MCF 10A (cell line): ENCODE measurements at regions of chr5 and their contacts with region 1.

Region 1: GRCh38 chr5:62779010-62779422 is 200.4 kb downstream of the LRRC70 start:
- DNase-seq: peak; percentile 69
- H3K4me3 Mint-ChIP-seq: no peak overlapping the region
- H3K27ac Mint-ChIP-seq: no peak overlapping the region
- H3K4me1 Mint-ChIP-seq: no peaks in the 10 kb centered on the region
- H3K27me3 Mint-ChIP-seq: no peaks in the 10 kb centered on the region
- CTCF ChIP-seq: peak; percentile 61

Region 2: DNA sequence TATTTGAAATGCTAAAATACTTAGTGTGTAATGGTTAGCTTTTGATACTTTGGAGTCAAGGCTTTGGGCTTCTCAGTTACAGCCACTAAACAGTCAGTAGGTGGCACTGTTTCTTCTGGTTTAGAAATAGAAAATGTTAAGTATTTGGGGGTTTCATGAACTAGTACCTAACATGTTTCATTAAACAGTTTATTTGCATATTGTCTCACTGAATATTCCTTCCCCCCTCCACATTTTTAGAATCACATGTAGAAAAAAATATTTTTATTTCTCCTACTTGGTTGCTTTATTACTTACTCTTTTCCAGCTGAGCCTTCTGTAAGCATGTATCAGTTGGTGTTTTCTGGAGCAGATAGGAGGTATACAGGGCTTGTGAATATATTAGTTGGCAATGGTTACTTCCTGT is 318.4 kb before region 1 on chr5:
- CTCF ChIA-PET with region 1: interaction called, 40 read pairs
- POLR2A ChIA-PET with region 1: no interaction called
- intact Hi-C with region 1: loop called (anchors 1 kb)
- DNase-seq: peak; percentile 45
- H3K4me3 Mint-ChIP-seq: no peak overlapping the region
- H3K27ac Mint-ChIP-seq: no peak overlapping the region
- H3K4me1 Mint-ChIP-seq: no peaks in the 10 kb centered on the region
- H3K27me3 Mint-ChIP-seq: no peaks in the 10 kb centered on the region
- CTCF ChIP-seq: peak; percentile 69

Region 3: DNA sequence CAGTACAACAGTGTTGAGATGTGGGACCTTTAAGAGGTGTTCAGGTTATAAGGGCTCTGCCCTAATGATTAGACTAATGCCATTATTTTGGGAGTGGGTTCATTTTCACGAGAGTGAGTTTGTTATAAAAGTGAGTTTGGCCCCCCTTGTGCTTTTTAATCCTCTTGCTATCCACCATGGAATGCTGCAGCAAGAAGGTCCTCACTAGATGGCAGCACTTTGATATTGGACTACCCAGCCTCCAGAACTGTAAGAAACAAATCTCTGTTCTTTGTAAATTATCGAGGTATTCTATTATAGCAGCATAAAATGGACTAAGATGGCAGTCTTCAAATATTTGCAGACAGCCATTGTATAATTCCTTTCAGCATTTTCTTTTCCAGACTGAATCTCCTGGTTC is 12.0 kb after region 1 on chr5:
- CTCF ChIA-PET with region 1: interaction called, 17 read pairs
- POLR2A ChIA-PET with region 1: interaction called, 5 read pairs
- intact Hi-C with region 1: no loop called
- DNase-seq: peak; percentile 28
- H3K4me3 Mint-ChIP-seq: no peak overlapping the region
- H3K27ac Mint-ChIP-seq: no peak overlapping the region
- H3K4me1 Mint-ChIP-seq: peaks cover 15% of the 10 kb centered on the region
- H3K27me3 Mint-ChIP-seq: no peaks in the 10 kb centered on the region
- CTCF ChIP-seq: peak; percentile 18

Region 4: DNA sequence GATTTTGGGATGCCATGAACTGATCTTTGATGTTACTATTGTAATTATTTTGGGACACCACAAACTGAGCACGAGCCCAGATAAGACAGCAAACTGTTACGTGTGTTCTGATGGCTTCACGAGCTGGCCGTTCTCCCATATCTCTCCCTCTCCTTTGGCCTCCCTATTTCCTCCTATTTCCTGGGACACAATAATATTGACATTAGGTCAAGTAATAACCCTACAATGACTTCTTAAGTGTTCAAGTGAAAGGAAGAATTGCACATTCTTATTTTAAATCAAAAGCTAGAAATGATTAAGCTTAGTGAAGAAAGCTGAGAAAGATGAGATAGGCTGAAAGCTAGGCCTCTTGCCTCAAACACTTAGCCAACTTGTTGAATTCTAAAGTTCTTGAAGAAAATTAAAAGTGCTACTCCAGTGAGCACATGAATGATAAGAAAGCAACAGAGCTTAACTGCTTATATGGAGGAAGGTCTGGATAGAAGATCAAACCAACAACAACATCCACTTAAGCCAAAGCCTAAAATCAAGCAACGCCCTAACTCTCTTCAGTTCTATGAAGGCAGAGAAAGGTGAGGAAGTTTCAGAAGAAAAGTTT is 46.7 kb after region 1 on chr5:
- CTCF ChIA-PET with region 1: no interaction called
- POLR2A ChIA-PET with region 1: no interaction called
- intact Hi-C with region 1: no loop called
- DNase-seq: no peak
- H3K4me3 Mint-ChIP-seq: no peak overlapping the region
- H3K27ac Mint-ChIP-seq: no peak overlapping the region
- H3K4me1 Mint-ChIP-seq: no peaks in the 10 kb centered on the region
- H3K27me3 Mint-ChIP-seq: no peaks in the 10 kb centered on the region
- CTCF ChIP-seq: no peak